Activated CD4-positive, alpha-beta memory T cell treated with anti-CD3 and anti-CD28 coated beads for 36 hours (primary cell): ENCODE measurements at regions of chr20 and their contacts with region 1.

Region 1: GRCh38 chr20:62740286-62741141 is 31.9 kb downstream of the NTSR1 start:
- DNase-seq: peak; percentile 95
- H3K4me3 Mint-ChIP-seq: peak overlapping the region; percentile 48
- H3K27ac Mint-ChIP-seq: peak overlapping the region; percentile 82
- H3K4me1 Mint-ChIP-seq: peaks cover 44% of the 10 kb centered on the region
- H3K27me3 Mint-ChIP-seq: no peaks in the 10 kb centered on the region

Region 2: DNA sequence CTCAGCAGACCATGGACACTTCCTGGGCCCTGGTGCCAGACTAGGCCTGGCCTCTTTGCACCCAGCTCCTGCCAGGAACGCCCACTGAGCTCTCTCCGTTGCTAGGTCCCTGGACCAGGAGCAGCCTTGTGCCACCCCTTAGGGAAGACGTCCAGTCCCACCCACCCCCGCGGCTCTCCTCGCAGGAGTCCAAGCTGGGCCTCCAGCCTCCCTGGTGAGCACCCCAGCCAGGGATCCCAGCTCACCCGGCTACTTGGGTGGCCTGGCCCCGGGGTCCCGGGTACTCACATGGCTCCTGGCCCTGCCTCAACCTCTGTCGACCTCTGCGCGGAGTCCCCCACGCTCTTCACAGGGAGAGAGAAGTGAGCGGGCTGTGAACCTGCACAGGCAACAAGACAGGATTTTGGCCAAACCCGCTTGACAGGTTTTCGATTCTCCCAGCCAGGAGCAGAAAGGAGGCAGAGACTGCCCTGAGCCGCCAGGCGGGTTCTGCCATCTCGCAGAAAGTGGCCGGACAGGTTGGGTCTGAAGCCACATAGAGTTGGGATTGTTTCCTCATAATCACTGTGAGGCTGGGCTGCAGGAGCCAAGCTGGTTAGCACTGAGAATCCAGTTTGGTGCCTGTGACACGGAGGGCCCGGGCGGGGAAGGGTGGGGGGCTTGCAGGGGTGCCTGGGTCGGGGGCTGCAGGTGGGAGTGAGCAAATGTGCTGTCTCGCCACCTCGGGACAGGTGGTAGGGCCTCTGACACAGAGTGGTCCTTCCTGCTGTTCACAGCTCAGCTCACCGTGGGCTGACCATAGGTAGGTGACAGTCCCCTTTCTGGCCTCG is 313.1 kb before region 1 on chr20 and contains the start of gene RBBP8NL:
- CTCF ChIA-PET with region 1: no interaction called
- POLR2A ChIA-PET with region 1: no interaction called
- intact Hi-C with region 1: no loop called
- DNase-seq: no peak
- H3K4me3 Mint-ChIP-seq: no peak within 1 kb of the TSS
- H3K27ac Mint-ChIP-seq: no peak within 1 kb of the TSS
- H3K4me1 Mint-ChIP-seq: no peaks in the 10 kb centered on the region
- H3K27me3 Mint-ChIP-seq: peaks cover 7% of the 10 kb centered on the region
- total RNA-seq, gene RBBP8NL: not detected

Region 3: GRCh38 chr20:62652051-62652926 is 88.2 kb before region 1 on chr20:
- CTCF ChIA-PET with region 1: no interaction called
- POLR2A ChIA-PET with region 1: interaction called, 8 read pairs
- intact Hi-C with region 1: loop called (anchors 1 kb)
- DNase-seq: peak; percentile 80
- H3K4me3 Mint-ChIP-seq: peak overlapping the region; percentile 63
- H3K27ac Mint-ChIP-seq: peak overlapping the region; percentile 84
- H3K4me1 Mint-ChIP-seq: peaks cover 29% of the 10 kb centered on the region
- H3K27me3 Mint-ChIP-seq: no peaks in the 10 kb centered on the region

Region 4: DNA sequence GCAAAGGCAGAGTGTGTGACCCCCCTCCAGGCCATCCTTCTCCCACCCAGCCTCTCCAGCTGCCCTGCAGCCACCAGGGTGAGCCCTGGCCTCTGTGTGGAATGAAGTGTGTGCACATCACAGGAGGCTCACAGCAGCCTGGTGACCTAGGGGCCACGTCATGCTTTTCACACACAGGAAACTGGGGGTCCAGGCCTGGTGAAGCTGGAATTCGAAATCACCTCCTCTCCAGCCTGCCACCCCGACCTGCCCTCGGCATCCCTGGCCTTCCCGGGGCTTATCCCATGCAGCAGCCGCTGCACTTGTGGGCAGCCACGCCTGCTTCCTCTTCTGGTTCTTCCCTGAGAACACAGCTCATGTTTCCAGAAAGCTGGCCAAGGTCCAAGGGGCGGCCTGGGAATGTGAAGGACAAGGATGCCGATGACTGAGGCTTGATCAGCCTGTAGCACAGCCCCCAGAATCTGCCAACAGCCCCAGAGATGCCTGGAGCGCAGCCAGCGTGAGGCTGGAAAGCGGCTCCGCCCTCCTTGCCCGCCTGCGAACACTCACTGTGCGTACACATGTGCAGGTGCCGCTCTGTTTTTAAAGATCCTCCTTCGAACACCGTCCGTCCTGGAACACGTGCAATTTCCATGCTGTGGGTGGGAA is 36.1 kb before region 1 on chr20:
- CTCF ChIA-PET with region 1: no interaction called
- POLR2A ChIA-PET with region 1: interaction called, 3 read pairs
- intact Hi-C with region 1: loop called (anchors 5 kb)
- DNase-seq: no peak
- H3K4me3 Mint-ChIP-seq: no peak overlapping the region
- H3K27ac Mint-ChIP-seq: no peak overlapping the region
- H3K4me1 Mint-ChIP-seq: peaks cover 8% of the 10 kb centered on the region
- H3K27me3 Mint-ChIP-seq: peaks cover 11% of the 10 kb centered on the region

Region 5: DNA sequence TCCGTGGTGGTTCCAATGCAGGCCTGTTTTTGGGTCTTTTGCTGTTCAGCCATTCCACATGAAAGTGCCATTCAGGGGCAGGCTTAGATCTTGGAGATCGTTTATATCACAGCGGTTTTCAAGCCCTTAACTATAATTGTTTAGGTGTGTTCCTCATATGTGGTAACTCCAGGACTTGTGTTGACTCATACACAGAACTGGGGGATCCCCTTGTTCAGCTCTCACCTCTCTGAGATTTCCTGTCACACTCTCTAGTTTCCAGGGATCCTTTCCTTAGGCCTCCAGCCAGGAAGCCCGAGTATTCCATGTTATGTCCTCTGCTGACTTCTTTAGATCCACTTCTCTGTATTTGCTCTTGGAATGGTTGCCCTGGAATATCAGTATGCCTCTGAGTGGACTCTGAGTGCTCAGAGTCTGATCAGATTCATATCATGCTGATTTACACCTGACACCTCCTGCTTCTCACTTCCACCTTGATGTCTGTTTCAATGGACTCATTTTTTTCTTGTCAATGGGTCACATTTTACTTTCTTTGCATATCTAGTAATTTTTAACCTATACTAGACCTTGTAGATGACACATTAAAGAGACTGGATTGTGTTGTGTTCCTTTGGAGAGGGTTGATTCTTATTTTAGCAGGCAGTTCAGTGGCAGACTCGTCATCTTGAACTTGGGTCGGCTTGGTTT is 18.9 kb before region 1 on chr20:
- CTCF ChIA-PET with region 1: no interaction called
- POLR2A ChIA-PET with region 1: no interaction called
- intact Hi-C with region 1: loop called (anchors 1 kb)
- DNase-seq: peak; percentile 18
- H3K4me3 Mint-ChIP-seq: no peak overlapping the region
- H3K27ac Mint-ChIP-seq: peak overlapping the region; percentile 13
- H3K4me1 Mint-ChIP-seq: peaks cover 16% of the 10 kb centered on the region
- H3K27me3 Mint-ChIP-seq: peaks cover 3% of the 10 kb centered on the region

Region 6: DNA sequence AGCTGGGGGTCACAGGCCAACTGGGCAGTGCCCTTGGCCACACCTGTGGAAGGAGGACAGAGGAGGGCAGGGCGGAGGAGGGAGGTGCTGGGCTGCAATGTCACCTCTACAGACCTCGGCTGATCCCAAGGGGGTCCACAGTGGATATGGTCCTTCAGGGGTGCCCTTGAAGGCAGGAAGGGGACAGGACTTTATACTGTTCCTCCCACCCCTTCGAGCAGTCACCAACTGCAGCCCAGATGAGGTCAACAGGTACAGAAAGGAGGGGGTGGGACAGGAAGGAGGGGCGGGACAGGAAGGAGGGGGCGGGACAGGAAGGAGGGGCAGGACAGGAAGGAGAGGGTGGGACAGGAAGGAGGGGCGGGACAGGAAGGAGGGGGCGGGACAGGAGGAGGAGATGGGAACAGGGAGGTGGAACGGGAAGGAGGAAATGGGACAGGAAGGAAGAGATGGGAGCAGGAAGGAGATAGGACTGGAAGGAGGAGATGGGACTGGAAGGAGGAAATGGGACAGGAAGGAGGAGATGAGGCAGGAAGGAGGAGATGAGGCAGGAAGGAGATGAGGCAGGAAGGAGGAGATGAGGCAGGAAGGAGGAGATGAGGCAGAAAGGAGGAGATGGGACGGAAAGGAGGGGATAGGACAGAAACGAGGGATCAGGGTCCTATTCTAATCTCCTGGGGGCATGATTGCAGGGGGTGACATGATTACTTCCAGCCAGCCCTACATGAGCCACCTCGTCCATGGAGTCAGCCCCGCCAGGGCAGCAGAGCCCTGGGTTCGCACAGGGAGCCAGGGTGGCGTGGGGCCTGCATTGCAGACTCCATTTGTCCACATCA is 36.4 kb after region 1 on chr20:
- CTCF ChIA-PET with region 1: no interaction called
- POLR2A ChIA-PET with region 1: no interaction called
- intact Hi-C with region 1: loop called (anchors 1 kb)
- DNase-seq: peak; percentile 84
- H3K4me3 Mint-ChIP-seq: peak overlapping the region; percentile 15
- H3K27ac Mint-ChIP-seq: peak overlapping the region; percentile 89
- H3K4me1 Mint-ChIP-seq: peaks cover 41% of the 10 kb centered on the region
- H3K27me3 Mint-ChIP-seq: no peaks in the 10 kb centered on the region